T-cell (primary cell): ENCODE measurements at regions of chr15 and their contacts with region 1.

Region 1: GRCh38 chr15:73972984-73973682 is 19.0 kb downstream of the STOML1 start:
- DNase-seq: peak; percentile 53 to 87 (median 69)
- ATAC-seq: peak; percentile 82 to 85 (median 84)
- H3K4me3 ChIP-seq: peak overlapping the region in 1 of 2 donors; percentile 26
- H3K4me3 Mint-ChIP-seq: peak overlapping the region in 2 of 3 donors; percentile 17 to 43
- H3K27ac ChIP-seq: no peak overlapping the region
- H3K27ac Mint-ChIP-seq: peak overlapping the region in 1 of 2 donors; percentile 43
- H3K4me1 ChIP-seq: peaks cover 2 to 26% of the 10 kb centered on the region in 2 experiments
- H3K4me1 Mint-ChIP-seq: peaks cover 31 to 34% (median 34%) of the 10 kb centered on the region in 3 donors
- H3K27me3 ChIP-seq: peaks cover 0 to 25% of the 10 kb centered on the region in 2 experiments
- H3K27me3 Mint-ChIP-seq: peaks cover 4 to 20% of the 10 kb centered on the region in 2 donors

Region 2: DNA sequence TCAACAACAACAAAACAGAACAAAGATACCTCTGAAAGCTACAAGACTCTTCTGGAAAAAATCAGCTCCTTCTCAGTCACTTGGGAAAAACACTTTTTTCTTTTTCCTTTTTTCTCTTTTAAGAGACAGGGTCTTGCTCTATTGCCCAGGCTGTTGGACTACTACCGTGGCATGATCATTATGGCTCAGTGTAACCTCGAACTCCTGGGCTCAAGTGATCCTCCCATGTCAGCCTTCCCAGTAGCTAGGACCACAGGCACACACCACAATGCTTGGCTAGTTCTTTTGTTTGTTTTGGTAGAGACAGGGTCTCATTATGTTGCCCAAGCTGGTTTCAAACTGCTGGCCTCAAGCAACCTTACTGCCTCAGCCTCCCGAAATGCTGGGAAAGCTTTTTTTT is 1868.0 kb before region 1 on chr15:
- CTCF ChIA-PET with region 1: no interaction called
- POLR2A ChIA-PET with region 1: no interaction called
- DNase-seq: no peak
- ATAC-seq: no peak
- H3K4me3 ChIP-seq: no peak overlapping the region
- H3K4me3 Mint-ChIP-seq: no peak overlapping the region
- H3K27ac ChIP-seq: no peak overlapping the region
- H3K27ac Mint-ChIP-seq: no peak overlapping the region
- H3K4me1 ChIP-seq: no peaks in the 10 kb centered on the region
- H3K4me1 Mint-ChIP-seq: peaks cover 18 to 26% (median 21%) of the 10 kb centered on the region in 3 donors
- H3K27me3 ChIP-seq: no peaks in the 10 kb centered on the region
- H3K27me3 Mint-ChIP-seq: no peaks in the 10 kb centered on the region

Region 3: GRCh38 chr15:73650416-73651126 is 322.6 kb before region 1 on chr15:
- CTCF ChIA-PET with region 1: no interaction called
- POLR2A ChIA-PET with region 1: no interaction called
- DNase-seq: no peak
- ATAC-seq: no peak
- H3K4me3 ChIP-seq: no peak overlapping the region
- H3K4me3 Mint-ChIP-seq: no peak overlapping the region
- H3K27ac ChIP-seq: no peak overlapping the region
- H3K27ac Mint-ChIP-seq: no peak overlapping the region
- H3K4me1 ChIP-seq: no peaks in the 10 kb centered on the region
- H3K4me1 Mint-ChIP-seq: no peaks in the 10 kb centered on the region
- H3K27me3 ChIP-seq: peaks cover 0 to 19% of the 10 kb centered on the region in 2 experiments
- H3K27me3 Mint-ChIP-seq: peaks cover 36 to 47% of the 10 kb centered on the region in 2 donors

Region 4: GRCh38 chr15:73870700-73871408 is 102.3 kb before region 1 on chr15:
- CTCF ChIA-PET with region 1: no interaction called
- POLR2A ChIA-PET with region 1: no interaction called
- DNase-seq: peak in 1 of 35 experiments; percentile 22
- ATAC-seq: no peak
- H3K4me3 ChIP-seq: no peak overlapping the region
- H3K4me3 Mint-ChIP-seq: no peak overlapping the region
- H3K27ac ChIP-seq: no peak overlapping the region
- H3K27ac Mint-ChIP-seq: no peak overlapping the region
- H3K4me1 ChIP-seq: peaks cover 0 to 3% of the 10 kb centered on the region in 2 experiments
- H3K4me1 Mint-ChIP-seq: peaks cover 2 to 10% (median 5%) of the 10 kb centered on the region in 3 donors
- H3K27me3 ChIP-seq: peaks cover 0 to 43% of the 10 kb centered on the region in 2 experiments
- H3K27me3 Mint-ChIP-seq: peaks cover 42 to 49% of the 10 kb centered on the region in 2 donors

Region 5: GRCh38 chr15:73959012-73959581 is 14.0 kb before region 1 on chr15:
- CTCF ChIA-PET with region 1: interaction called, 4 to 10 read pairs
- POLR2A ChIA-PET with region 1: no interaction called
- DNase-seq: peak in 25 of 35 experiments; percentile 14 to 63 (median 28)
- ATAC-seq: peak; percentile 95 to 99 (median 98)
- H3K4me3 ChIP-seq: no peak overlapping the region
- H3K4me3 Mint-ChIP-seq: peak overlapping the region; percentile 4 to 55 (median 53)
- H3K27ac ChIP-seq: peak overlapping the region; percentile 41
- H3K27ac Mint-ChIP-seq: peak overlapping the region; percentile 86 to 94
- H3K4me1 ChIP-seq: peaks cover 10 to 32% of the 10 kb centered on the region in 2 experiments
- H3K4me1 Mint-ChIP-seq: peaks cover 32 to 35% (median 34%) of the 10 kb centered on the region in 3 donors
- H3K27me3 ChIP-seq: no peaks in the 10 kb centered on the region
- H3K27me3 Mint-ChIP-seq: no peaks in the 10 kb centered on the region

Region 6: GRCh38 chr15:73994419-73994883 is 21.3 kb after region 1 on chr15 and contains the start of gene PML:
- CTCF ChIA-PET with region 1: interaction called, 4 to 19 read pairs
- POLR2A ChIA-PET with region 1: interaction called in 1 of 2 experiments, 5 read pairs
- DNase-seq: peak; percentile 74 to 94 (median 89)
- ATAC-seq: peak; percentile 74 to 81 (median 77)
- H3K4me3 ChIP-seq: peak within 1 kb of the TSS; percentile 83 to 88
- H3K4me3 Mint-ChIP-seq: peak within 1 kb of the TSS; percentile 91 to 99 (median 94)
- H3K27ac ChIP-seq: peak within 1 kb of the TSS; percentile 88
- H3K27ac Mint-ChIP-seq: peak within 1 kb of the TSS; percentile 93 to 98
- H3K4me1 ChIP-seq: peaks cover 37 to 58% of the 10 kb centered on the region in 2 experiments
- H3K4me1 Mint-ChIP-seq: peaks cover 72 to 79% (median 73%) of the 10 kb centered on the region in 3 donors
- H3K27me3 ChIP-seq: no peaks in the 10 kb centered on the region
- H3K27me3 Mint-ChIP-seq: no peaks in the 10 kb centered on the region
- total RNA-seq, gene PML: 43.0 to 79.8 (median 60.7) TPM

Region 7: DNA sequence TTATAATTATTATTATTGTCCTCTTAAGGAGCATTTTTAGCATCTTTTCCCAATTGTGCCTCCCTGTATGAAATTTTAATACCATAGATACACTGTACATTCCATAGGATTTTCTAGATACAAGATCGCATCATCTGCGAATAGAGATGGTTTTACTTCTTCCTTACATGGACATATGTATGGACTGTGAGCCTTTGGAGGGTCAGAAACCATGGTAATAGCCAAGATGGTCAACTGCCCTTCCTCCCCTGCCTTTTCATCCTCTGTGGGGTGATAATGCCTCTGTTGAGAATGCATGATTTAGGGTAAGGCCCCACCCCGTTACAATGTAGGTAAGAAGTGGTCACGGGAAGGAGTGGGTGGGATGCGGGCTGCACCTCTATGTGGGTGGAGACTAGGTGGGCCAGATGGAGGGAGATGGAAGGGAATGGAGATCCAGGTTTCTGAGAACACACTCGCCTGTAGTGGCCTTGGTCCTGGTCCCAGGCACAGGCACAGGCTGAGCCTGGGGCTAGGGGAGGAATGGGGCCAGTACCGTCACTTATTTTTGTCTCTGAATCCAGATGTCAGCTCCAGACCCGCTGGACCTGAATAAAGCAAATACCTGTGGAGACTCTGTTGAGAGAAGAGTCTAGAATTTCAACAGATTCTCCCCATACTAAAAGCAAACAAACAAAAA is 77.6 kb after region 1 on chr15:
- CTCF ChIA-PET with region 1: interaction called in 1 of 2 experiments, 13 read pairs
- POLR2A ChIA-PET with region 1: interaction called in 1 of 2 experiments, 5 read pairs
- DNase-seq: peak in 1 of 35 experiments; percentile 9
- ATAC-seq: no peak
- H3K4me3 ChIP-seq: no peak overlapping the region
- H3K4me3 Mint-ChIP-seq: no peak overlapping the region
- H3K27ac ChIP-seq: no peak overlapping the region
- H3K27ac Mint-ChIP-seq: no peak overlapping the region
- H3K4me1 ChIP-seq: peaks cover 9 to 20% of the 10 kb centered on the region in 2 experiments
- H3K4me1 Mint-ChIP-seq: peaks cover 23 to 34% (median 24%) of the 10 kb centered on the region in 3 donors
- H3K27me3 ChIP-seq: no peaks in the 10 kb centered on the region
- H3K27me3 Mint-ChIP-seq: no peaks in the 10 kb centered on the region

Region 8: DNA sequence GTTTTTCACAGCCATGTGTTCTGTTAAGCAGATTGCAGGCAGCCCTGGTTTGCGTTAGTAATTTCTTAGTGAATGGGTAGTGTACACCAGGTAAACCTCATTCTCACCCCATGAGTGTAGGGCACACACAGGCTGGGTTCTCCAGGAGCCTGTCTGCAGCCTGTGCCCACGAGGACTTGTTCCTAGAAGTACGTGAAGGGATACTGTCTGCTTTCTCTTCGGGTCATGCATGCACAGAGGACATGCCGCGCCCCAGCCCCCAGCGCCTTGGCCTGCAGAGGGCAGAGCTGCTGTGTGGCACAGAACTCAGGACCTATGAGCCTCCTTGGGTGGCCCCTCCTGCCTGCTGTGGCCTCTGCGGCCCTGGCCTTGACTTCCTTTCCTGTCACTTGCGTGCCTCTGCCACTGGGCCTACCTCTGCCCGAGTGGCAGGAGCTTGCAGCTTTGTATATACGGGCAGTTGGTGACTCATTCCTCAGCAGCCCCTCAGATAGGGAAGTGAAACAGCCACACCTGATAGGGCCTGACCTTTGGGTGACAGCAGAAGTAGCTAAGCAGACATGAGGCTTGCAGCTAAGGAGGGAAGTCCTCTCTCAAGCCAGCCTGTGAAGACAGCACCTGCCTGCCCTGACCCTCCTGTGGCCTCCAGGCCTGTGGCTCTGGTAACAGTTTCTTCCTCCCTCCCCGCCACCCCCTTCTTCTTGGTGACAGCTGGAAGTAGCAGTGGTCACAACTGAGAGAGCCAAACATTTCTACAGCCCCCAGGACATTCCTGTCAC is 1069.8 kb after region 1 on chr15:
- CTCF ChIA-PET with region 1: interaction called in 1 of 2 experiments, 12 read pairs
- POLR2A ChIA-PET with region 1: no interaction called
- DNase-seq: peak; percentile 22 to 81 (median 53)
- ATAC-seq: peak; percentile 73 to 84 (median 78)
- H3K4me3 ChIP-seq: no peak overlapping the region
- H3K4me3 Mint-ChIP-seq: no peak overlapping the region
- H3K27ac ChIP-seq: peak overlapping the region; percentile 53
- H3K27ac Mint-ChIP-seq: peak overlapping the region; percentile 34 to 66
- H3K4me1 ChIP-seq: peaks cover 0 to 44% of the 10 kb centered on the region in 2 experiments
- H3K4me1 Mint-ChIP-seq: peaks cover 14 to 53% (median 28%) of the 10 kb centered on the region in 3 donors
- H3K27me3 ChIP-seq: no peaks in the 10 kb centered on the region
- H3K27me3 Mint-ChIP-seq: no peaks in the 10 kb centered on the region